Transverse colon (tissue), 4 donors: ENCODE measurements at regions of chr4 and their contacts with region 1.

Region 1: GRCh38 chr4:75948822-75949444 is 8.1 kb upstream of the NAAA start:
- DNase-seq: no peak
- H3K4me3 ChIP-seq: no peak overlapping the region
- H3K27ac ChIP-seq: peak overlapping the region in 1 of 4 donors; percentile 22
- H3K4me1 ChIP-seq: peaks cover 0 to 11% (median 0%) of the 10 kb centered on the region in 4 donors
- H3K27me3 ChIP-seq: no peaks in the 10 kb centered on the region
- CTCF ChIP-seq: no peak
- EP300 ChIP-seq: no peak
- POLR2A ChIP-seq: no peak

Region 2: DNA sequence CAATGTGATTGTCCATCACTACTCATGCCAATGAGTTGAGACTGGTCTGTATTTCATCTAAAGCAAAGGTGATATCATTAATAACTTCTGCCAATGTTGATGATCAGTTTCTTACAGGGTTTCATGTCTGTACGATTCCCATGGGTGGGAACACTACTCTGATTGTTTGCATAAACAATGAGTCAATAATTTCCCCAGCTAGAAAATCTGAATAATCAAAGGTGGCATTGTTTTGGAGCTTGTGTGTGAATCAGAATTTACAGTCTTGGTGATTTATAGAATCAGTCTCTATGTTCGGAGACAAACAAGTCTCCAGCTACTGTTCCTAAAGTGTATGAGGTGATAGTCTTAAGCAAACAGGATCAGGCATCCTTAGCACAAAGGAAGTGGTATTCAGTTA is 1051.5 kb before region 1 on chr4:
- in situ Hi-C with region 1: no loop called
- intact Hi-C with region 1: no loop called
- DNase-seq: no peak
- H3K4me3 ChIP-seq: no peak overlapping the region
- H3K27ac ChIP-seq: no peak overlapping the region
- H3K4me1 ChIP-seq: no peaks in the 10 kb centered on the region
- H3K27me3 ChIP-seq: no peaks in the 10 kb centered on the region
- CTCF ChIP-seq: no peak
- EP300 ChIP-seq: no peak
- POLR2A ChIP-seq: no peak

Region 3: GRCh38 chr4:75786526-75786925 is 162.4 kb before region 1 on chr4:
- in situ Hi-C with region 1: loop called in 1 of 4 experiments (anchors 25 kb)
- intact Hi-C with region 1: no loop called
- DNase-seq: no peak
- H3K4me3 ChIP-seq: no peak overlapping the region
- H3K27ac ChIP-seq: no peak overlapping the region
- H3K4me1 ChIP-seq: no peaks in the 10 kb centered on the region
- H3K27me3 ChIP-seq: no peaks in the 10 kb centered on the region
- CTCF ChIP-seq: no peak
- EP300 ChIP-seq: no peak
- POLR2A ChIP-seq: no peak

Region 4: GRCh38 chr4:75968084-75968483 is 19.2 kb after region 1 on chr4:
- in situ Hi-C with region 1: no loop called
- intact Hi-C with region 1: loop called (anchors 1 kb)
- DNase-seq: no peak
- H3K4me3 ChIP-seq: no peak overlapping the region
- H3K27ac ChIP-seq: no peak overlapping the region
- H3K4me1 ChIP-seq: no peaks in the 10 kb centered on the region
- H3K27me3 ChIP-seq: no peaks in the 10 kb centered on the region
- CTCF ChIP-seq: no peak
- EP300 ChIP-seq: no peak
- POLR2A ChIP-seq: no peak